ENCODE measurements at regions of chr2 and their contacts with region 1.

Region 1: DNA sequence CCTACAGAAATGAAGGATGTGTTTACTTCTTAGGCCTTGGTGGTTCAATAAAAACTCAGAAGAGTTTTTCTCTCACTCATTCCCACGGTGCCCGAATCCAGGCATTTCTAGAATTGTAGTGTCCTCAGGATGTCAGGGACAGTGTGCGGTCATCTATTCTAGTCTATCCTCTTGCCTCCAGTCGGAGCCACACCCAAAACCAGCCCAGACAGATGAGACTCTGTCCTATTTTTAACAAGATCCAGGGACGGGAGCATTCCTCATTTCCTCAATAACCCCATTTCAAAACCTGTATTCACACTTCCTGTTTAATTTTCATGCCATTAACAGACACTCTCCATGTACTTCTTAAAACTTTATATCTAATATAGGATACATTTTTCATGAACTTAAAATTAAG is 11.6 kb upstream of the RBMS1 start:
- DNase-seq: no peak
- ATAC-seq: no peak
- H3K4me3 ChIP-seq: no peak overlapping the region
- H3K4me3 Mint-ChIP-seq: no peak overlapping the region
- H3K27ac ChIP-seq: no peak overlapping the region
- H3K27ac Mint-ChIP-seq: no peak overlapping the region
- H3K4me1 ChIP-seq: peaks cover 6% of the 10 kb centered on the region
- H3K4me1 Mint-ChIP-seq: peaks cover 13 to 15% of the 10 kb centered on the region in 2 donors
- H3K27me3 ChIP-seq: no peaks in the 10 kb centered on the region
- H3K27me3 Mint-ChIP-seq: no peaks in the 10 kb centered on the region
- CTCF ChIP-seq: no peak

Region 2: GRCh38 chr2:160332318-160332717 is 172.9 kb before region 1 on chr2:
- intact Hi-C with region 1: no loop called
- DNase-seq: peak in 1 of 2 donors; percentile 53
- ATAC-seq: peak; percentile 67 to 73 (median 71)
- H3K4me3 ChIP-seq: no peak overlapping the region
- H3K4me3 Mint-ChIP-seq: peak overlapping the region; percentile 63
- H3K27ac ChIP-seq: no peak overlapping the region
- H3K27ac Mint-ChIP-seq: peak overlapping the region; percentile 88
- H3K4me1 ChIP-seq: peaks cover 23% of the 10 kb centered on the region
- H3K4me1 Mint-ChIP-seq: peaks cover 89 to 95% of the 10 kb centered on the region in 2 donors
- H3K27me3 ChIP-seq: no peaks in the 10 kb centered on the region
- H3K27me3 Mint-ChIP-seq: no peaks in the 10 kb centered on the region
- CTCF ChIP-seq: no peak

Region 3: DNA sequence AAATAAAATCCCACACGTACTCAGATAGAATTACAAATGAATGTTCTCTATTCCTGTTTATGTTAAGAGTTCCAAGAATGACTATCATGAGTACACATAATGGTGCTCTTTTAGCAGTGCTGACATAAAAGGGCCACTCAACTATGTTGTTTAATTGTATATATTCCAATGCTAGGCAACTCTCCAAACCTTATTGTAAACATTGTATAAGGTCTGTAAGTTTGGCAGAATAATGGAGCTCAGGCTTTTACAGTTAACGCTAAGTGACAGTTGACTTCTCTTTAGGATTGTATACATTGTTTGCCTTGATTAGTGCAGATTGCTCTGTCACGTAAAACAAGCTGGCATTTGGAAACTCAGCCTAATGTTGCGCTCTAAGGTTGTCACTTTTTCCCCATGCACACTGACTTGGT is 32.4 kb before region 1 on chr2:
- intact Hi-C with region 1: no loop called
- DNase-seq: no peak
- ATAC-seq: no peak
- H3K4me3 ChIP-seq: no peak overlapping the region
- H3K4me3 Mint-ChIP-seq: no peak overlapping the region
- H3K27ac ChIP-seq: no peak overlapping the region
- H3K27ac Mint-ChIP-seq: no peak overlapping the region
- H3K4me1 ChIP-seq: no peaks in the 10 kb centered on the region
- H3K4me1 Mint-ChIP-seq: no peaks in the 10 kb centered on the region
- H3K27me3 ChIP-seq: no peaks in the 10 kb centered on the region
- H3K27me3 Mint-ChIP-seq: peaks cover 2 to 7% of the 10 kb centered on the region in 2 donors
- CTCF ChIP-seq: no peak

Region 4: DNA sequence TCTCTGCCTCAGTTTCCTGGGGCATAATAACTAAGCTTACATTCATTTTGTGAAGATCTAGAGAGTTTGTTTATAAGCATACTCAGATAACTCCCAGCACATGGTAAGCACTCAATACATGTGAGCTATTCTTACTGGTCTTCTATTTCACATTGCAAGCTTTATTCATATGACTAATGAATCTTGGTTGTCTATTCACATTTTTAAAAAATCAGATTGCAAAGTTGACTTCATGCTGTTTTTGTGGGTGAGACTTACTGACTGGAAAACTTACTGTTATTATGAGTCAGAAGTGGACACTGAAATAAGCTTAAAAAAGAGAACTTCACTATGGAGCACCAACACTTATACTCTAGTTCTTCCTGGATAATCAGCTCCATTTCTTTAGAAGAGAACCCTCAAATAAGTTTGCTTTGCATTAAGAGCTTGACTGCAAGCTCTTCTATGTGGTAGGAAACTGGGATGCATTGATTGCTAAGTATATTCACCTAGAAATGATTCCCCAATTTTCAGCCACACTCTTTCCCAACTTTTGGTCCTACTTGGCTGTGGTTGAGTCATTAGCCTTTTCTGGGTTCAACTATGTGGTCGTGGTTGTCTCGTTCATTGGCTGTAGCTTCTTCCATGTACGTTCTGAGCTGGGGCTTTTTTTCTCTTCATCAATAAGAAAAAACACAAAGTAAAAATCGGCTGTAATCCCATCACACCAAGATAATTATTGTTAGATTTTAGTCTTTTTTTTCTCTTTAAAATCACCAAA is 17.9 kb after region 1 on chr2:
- intact Hi-C with region 1: loop called (anchors 2 kb)
- DNase-seq: no peak
- ATAC-seq: no peak
- H3K4me3 ChIP-seq: no peak overlapping the region
- H3K4me3 Mint-ChIP-seq: no peak overlapping the region
- H3K27ac ChIP-seq: no peak overlapping the region
- H3K27ac Mint-ChIP-seq: no peak overlapping the region
- H3K4me1 ChIP-seq: no peaks in the 10 kb centered on the region
- H3K4me1 Mint-ChIP-seq: no peaks in the 10 kb centered on the region
- H3K27me3 ChIP-seq: no peaks in the 10 kb centered on the region
- H3K27me3 Mint-ChIP-seq: peaks cover 2 to 7% of the 10 kb centered on the region in 2 donors
- CTCF ChIP-seq: no peak